ENCODE measurements at regions of chr3 and their contacts with region 1.

Region 1: DNA sequence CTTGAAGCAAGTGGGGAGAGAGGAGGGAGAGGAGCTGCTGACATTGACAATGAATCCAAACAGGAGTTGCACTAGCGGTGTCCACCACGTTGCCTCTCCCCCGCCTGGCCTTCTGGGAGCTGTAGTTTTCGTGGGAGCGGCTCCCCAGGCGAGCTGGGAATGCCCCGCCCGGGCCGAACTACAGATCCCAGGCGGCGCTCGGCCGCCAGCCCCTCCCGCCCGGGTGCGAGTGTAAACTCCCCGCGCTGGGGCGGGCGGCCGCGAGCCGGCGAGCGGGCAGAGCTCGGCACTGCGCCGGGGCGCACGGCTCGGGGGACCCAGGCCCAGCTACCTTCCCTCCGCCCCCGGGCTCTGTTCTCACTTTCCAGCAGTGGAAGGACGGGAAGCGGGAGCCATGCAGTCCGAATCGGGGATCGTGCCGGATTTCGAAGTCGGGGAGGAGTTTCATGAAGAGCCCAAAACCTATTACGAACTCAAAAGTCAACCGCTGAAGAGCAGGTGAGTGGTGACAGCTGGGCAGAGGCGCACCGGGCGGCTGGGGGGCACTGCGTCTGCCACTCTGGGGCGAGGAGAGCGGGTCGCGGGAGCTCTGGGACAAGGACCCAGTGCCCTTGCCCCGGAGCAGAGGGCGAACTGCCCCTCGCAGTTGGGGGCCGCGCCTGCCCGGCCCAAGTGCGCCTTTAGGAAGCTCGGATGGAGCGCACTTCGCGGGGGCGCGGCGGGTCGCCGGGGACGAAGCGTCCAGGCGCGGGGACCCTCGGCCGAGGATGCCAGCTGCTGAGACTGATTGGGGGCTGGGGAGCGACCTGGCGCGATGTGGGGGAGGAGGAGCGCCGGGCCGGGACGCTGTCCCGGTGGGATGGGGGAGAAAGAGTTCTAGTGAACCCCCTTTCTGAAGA is at the start of gene MITF:
- DNase-seq: peak; percentile 97
- H3K4me3 ChIP-seq: peak within 1 kb of the TSS; percentile 83 to 95 (median 90)
- H3K27ac ChIP-seq: peak within 1 kb of the TSS; percentile 90 to 94 (median 92)
- H3K4me1 ChIP-seq: peaks cover 26 to 57% (median 53%) of the 10 kb centered on the region in 4 donors
- H3K27me3 ChIP-seq: no peaks in the 10 kb centered on the region
- CTCF ChIP-seq: peak in 1 of 3 experiments; percentile 3
- EP300 ChIP-seq: no peak
- POLR2A ChIP-seq: peak; percentile 85
- total RNA-seq, gene MITF: 68.1 to 141 (median 81.2) TPM

Region 2: GRCh38 chr3:68151359-68151758 is 1588.1 kb before region 1 on chr3:
- intact Hi-C with region 1: no loop called
- DNase-seq: no peak
- H3K4me3 ChIP-seq: no peak overlapping the region
- H3K27ac ChIP-seq: no peak overlapping the region
- H3K4me1 ChIP-seq: no peaks in the 10 kb centered on the region
- H3K27me3 ChIP-seq: no peaks in the 10 kb centered on the region
- CTCF ChIP-seq: no peak
- EP300 ChIP-seq: no peak
- POLR2A ChIP-seq: no peak

Region 3: DNA sequence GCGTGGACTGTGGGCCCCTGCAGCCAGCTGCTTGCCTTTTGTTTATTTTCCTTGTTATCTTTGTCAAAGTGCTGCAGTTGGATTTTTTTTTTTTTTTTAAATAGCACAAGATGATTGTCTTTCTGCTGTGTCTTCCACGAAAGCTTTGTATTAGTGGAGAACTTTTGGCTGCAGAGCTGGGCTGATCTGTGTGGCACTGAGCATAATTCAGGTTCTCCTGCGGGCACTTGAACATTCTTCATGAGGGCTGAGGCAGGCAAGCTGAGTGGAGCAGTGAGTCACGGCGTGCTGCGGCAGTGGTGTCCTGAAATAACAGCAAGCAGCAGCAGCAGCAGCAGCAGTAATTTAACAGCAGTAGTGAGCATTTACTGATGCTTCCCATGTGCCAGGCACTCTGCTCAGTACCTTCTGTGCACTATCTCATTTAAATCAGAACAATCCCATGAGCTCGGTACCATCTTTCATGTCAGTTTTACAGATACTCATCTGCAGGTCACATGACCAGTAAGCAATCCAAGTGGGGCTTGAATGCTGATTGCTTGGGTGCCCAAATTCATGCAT is 45.6 kb after region 1 on chr3:
- intact Hi-C with region 1: loop called (anchors 2 kb)
- DNase-seq: no peak
- H3K4me3 ChIP-seq: no peak overlapping the region
- H3K27ac ChIP-seq: peak overlapping the region; percentile 58 to 70 (median 64)
- H3K4me1 ChIP-seq: peaks cover 46 to 76% (median 63%) of the 10 kb centered on the region in 4 donors
- H3K27me3 ChIP-seq: no peaks in the 10 kb centered on the region
- CTCF ChIP-seq: no peak
- EP300 ChIP-seq: no peak
- POLR2A ChIP-seq: no peak

Region 4: DNA sequence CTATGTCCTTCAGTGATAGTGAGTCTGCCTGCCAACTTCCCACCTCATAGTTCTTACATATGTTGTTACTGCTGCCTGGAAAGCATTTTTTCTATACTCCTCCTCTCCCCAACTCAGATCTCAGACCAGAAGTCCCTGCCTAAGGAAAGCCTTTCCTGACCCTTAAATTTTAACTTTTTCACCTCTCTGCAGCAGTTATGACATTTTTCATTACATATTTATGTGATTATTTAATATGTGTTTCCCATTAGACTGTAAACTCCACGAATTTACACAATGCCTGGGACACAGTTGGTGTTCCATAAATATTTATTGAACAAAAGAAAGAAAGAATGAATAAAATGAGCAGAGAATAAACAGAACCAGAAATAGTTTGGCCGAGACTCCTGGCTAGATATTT is 125.3 kb after region 1 on chr3:
- intact Hi-C with region 1: loop called (anchors 5 kb)
- DNase-seq: no peak
- H3K4me3 ChIP-seq: no peak overlapping the region
- H3K27ac ChIP-seq: peak overlapping the region; percentile 66 to 82 (median 76)
- H3K4me1 ChIP-seq: peaks cover 31 to 89% (median 68%) of the 10 kb centered on the region in 4 donors
- H3K27me3 ChIP-seq: no peaks in the 10 kb centered on the region
- CTCF ChIP-seq: no peak
- EP300 ChIP-seq: no peak
- POLR2A ChIP-seq: no peak

Measured in esophagus muscularis mucosa (tissue), 4 donors.